ENCODE measurements at regions of chr12 and their contacts with region 1.

Region 1: DNA sequence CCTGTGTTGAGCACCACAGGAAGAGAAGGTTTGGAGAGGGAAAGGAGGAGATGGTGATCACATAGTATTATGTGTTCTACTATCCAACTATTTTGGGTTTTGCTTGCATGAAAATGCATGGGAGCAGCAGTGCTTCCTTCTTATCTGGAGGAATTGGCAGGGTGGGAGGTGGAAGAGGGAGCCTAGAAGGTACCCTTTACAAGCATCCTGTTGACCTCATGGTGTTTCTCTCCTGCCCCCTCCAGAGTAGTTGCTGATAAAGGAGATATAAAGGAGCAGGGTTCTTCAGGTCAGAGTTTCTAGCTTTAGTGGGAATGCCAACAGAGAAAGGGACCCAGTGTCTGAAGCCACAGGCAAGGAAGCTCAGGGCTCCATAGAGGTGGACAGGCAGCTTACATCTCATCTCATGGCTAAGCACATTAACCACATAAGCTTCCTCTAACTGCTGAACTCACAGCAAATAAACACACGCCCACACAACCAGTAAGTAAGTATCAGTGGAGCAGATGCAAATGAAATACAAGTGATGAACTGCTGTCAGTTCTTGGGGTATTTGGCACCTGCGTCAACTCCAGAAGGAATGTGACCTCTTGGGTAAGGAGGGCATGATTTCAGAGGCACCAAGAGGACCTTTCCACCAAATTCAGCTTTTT is 174.2 kb upstream of the SLC38A2 start:
- DNase-seq: peak; percentile 71
- H3K4me3 ChIP-seq: no peak overlapping the region
- H3K27ac ChIP-seq: peak overlapping the region; percentile 100
- H3K4me1 ChIP-seq: peaks cover 56% of the 10 kb centered on the region
- H3K27me3 ChIP-seq: no peaks in the 10 kb centered on the region
- CTCF ChIP-seq: no peak

Region 2: GRCh38 chr12:46268590-46269558 is 277.9 kb before region 1 on chr12 and contains the start of gene SLC38A1:
- CTCF ChIA-PET with region 1: no interaction called
- dilution Hi-C with region 1: no loop called
- in situ Hi-C with region 1: loop called in 1 of 2 experiments (anchors 25 kb)
- intact Hi-C with region 1: loop called (anchors 2 kb)
- DNase-seq: peak; percentile 88
- H3K4me3 ChIP-seq: peak within 1 kb of the TSS; percentile 51 to 97 (median 95)
- H3K27ac ChIP-seq: peak within 1 kb of the TSS; percentile 96
- H3K4me1 ChIP-seq: peaks cover 31% of the 10 kb centered on the region
- H3K27me3 ChIP-seq: no peaks in the 10 kb centered on the region
- CTCF ChIP-seq: peak in 1 of 2 donors; percentile 17
- total RNA-seq, gene SLC38A1: 208 to 360 TPM

Region 3: DNA sequence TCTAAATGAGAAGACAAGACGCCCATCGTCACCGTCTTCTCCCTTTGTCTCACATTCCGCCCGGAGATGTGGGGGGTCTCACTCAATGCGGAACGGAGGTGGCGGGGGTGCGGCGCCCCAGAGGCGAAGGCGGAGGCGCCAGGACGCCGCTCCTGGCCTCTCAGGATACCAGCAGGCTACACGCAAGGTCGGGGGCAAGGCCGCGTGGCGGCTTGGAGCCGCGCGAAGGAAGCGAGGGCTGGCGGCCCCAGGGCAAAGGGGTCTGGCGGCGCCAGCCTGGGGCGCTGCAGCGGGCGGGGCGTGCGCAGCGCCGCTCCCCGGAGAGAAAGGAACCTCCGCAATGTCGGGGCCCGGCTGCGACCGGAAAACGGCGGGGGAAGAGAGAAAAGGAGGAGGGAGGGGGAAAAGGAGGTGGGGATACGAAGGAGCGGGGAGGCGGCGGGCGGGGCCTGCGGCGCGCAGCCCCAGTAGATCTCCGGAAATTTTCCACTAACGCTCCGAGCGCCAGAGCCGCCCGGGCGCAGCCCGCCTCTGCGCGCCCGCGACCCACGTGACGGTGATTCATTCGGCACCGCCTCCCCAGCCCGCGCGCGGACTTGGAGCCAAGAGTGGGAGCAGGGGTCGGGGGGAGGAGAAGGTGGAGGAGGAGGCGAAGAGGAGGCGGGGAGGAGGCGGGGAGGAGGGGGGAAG is 163.7 kb before region 1 on chr12:
- CTCF ChIA-PET with region 1: no interaction called
- dilution Hi-C with region 1: no loop called
- in situ Hi-C with region 1: loop called (anchors 10 to 25 kb)
- intact Hi-C with region 1: loop called (anchors 1 kb)
- DNase-seq: peak; percentile 95
- H3K4me3 ChIP-seq: peak overlapping the region; percentile 60 to 68 (median 64)
- H3K27ac ChIP-seq: peak overlapping the region; percentile 96
- H3K4me1 ChIP-seq: peaks cover 50% of the 10 kb centered on the region
- H3K27me3 ChIP-seq: no peaks in the 10 kb centered on the region
- CTCF ChIP-seq: peak in 1 of 2 donors; percentile 8

Region 4: GRCh38 chr12:46442239-46442638 is 104.5 kb before region 1 on chr12:
- CTCF ChIA-PET with region 1: no interaction called
- dilution Hi-C with region 1: no loop called
- in situ Hi-C with region 1: no loop called
- intact Hi-C with region 1: loop called (anchors 1 kb)
- DNase-seq: peak; percentile 73
- H3K4me3 ChIP-seq: peak overlapping the region in 2 of 3 experiments; percentile 7 to 10
- H3K27ac ChIP-seq: peak overlapping the region; percentile 96
- H3K4me1 ChIP-seq: peaks cover 60% of the 10 kb centered on the region
- H3K27me3 ChIP-seq: no peaks in the 10 kb centered on the region
- CTCF ChIP-seq: no peak

Region 5: DNA sequence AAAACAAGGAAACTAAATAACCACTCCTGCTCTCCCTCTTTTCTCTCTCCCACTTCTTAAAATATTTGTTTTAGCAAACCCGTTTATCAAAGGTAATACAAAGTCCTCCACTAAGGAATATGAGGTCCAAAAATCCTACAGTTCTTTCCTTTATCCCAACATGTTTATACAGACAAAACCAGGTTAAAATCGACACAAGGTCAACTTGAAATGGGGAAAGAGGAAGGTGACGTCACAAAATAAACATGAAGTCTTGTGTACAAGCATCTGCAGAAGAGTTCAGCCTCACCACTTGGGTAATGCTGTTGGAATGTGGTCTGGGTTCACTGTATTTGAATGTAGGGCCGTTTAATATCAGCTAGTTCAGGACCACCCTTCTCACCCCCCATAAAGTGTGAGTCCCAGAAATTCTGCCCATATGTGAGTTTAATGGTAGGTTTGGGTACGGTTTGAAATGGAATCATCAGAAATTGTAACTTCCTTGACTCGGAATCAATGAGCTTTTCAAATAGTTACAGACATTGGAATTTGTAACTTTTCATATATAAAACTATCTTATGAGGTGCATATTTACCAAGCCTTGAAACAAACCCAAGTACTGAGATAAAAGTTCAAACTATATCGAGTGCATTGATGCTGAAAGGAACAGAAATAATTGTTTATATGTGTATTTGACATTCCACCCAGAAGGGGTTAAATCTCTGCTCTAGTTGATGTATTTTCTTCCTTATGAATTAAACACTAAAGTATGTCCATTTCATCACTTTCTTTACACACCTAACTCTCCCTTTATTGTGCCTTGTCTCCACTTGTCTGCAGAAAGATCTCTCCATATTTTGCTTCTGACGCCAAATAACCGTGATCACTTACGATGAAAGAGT is 54.0 kb before region 1 on chr12:
- CTCF ChIA-PET with region 1: no interaction called
- dilution Hi-C with region 1: no loop called
- in situ Hi-C with region 1: no loop called
- intact Hi-C with region 1: loop called (anchors 2 kb)
- DNase-seq: peak; percentile 85
- H3K4me3 ChIP-seq: no peak overlapping the region
- H3K27ac ChIP-seq: peak overlapping the region; percentile 94
- H3K4me1 ChIP-seq: peaks cover 56% of the 10 kb centered on the region
- H3K27me3 ChIP-seq: no peaks in the 10 kb centered on the region
- CTCF ChIP-seq: peak; percentile 12 to 17

Region 6: DNA sequence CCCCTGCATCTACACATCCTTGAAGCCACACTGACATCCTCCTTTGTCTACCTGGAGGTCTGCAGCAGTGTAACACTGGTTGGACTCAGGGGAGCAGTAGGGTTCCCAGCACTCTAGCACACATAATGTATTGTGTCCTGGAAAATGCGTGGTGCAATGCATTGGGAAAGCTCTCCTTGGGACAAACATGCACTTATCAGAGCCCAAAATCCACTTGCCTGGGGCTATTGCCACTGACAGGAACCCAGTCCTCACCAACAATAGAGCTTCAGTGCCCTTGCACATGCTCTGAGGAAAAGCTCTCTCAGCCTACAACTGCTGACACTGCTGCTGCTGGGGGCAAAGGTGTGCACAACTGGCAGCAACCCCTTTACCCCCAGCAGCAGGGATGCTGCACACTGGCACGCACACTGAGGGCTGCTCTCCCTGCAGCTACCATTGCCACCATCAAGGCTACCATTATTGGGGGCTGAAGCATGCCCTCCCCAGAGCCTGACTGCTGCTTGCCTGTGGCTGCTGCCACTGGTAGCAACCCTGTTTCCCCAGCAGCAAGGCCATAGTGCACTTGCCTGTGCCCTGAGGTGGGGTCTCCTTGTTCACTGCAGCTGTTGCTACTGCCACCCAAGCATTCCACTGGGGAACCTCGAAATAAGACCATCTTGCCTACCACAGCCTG is 57.2 kb after region 1 on chr12:
- CTCF ChIA-PET with region 1: no interaction called
- dilution Hi-C with region 1: no loop called
- in situ Hi-C with region 1: no loop called
- intact Hi-C with region 1: no loop called
- DNase-seq: no peak
- H3K4me3 ChIP-seq: no peak overlapping the region
- H3K27ac ChIP-seq: no peak overlapping the region
- H3K4me1 ChIP-seq: peaks cover 3% of the 10 kb centered on the region
- H3K27me3 ChIP-seq: no peaks in the 10 kb centered on the region
- CTCF ChIP-seq: no peak